Dendritic cell treated with granulocyte-macrophage colony-stimulating factor and Interleukin-4, amounts not matched to agents 40 ng/mL and 50 ng/mL, for 4 days (primary cell): ENCODE measurements at regions of chr12 and their contacts with region 1.

Region 1: GRCh38 chr12:10243818-10244520 is 31.3 kb downstream of the GABARAPL1 start:
- H3K4me3 Mint-ChIP-seq: peak overlapping the region; percentile 77
- H3K27ac Mint-ChIP-seq: peak overlapping the region; percentile 68
- H3K4me1 Mint-ChIP-seq: peaks cover 12% of the 10 kb centered on the region
- H3K27me3 Mint-ChIP-seq: peaks cover 17% of the 10 kb centered on the region

Region 2: GRCh38 chr12:10130042-10130441 is 113.9 kb before region 1 on chr12 and contains the start of gene CLEC7A:
- intact Hi-C with region 1: no loop called
- H3K4me3 Mint-ChIP-seq: peak within 1 kb of the TSS; percentile 84
- H3K27ac Mint-ChIP-seq: peak within 1 kb of the TSS; percentile 97
- H3K4me1 Mint-ChIP-seq: peaks cover 48% of the 10 kb centered on the region
- H3K27me3 Mint-ChIP-seq: no peaks in the 10 kb centered on the region

Region 3: GRCh38 chr12:10310926-10311720 is 67.2 kb after region 1 on chr12:
- intact Hi-C with region 1: loop called (anchors 10 kb)
- H3K4me3 Mint-ChIP-seq: no peak overlapping the region
- H3K27ac Mint-ChIP-seq: no peak overlapping the region
- H3K4me1 Mint-ChIP-seq: peaks cover 9% of the 10 kb centered on the region
- H3K27me3 Mint-ChIP-seq: no peaks in the 10 kb centered on the region

Region 4: DNA sequence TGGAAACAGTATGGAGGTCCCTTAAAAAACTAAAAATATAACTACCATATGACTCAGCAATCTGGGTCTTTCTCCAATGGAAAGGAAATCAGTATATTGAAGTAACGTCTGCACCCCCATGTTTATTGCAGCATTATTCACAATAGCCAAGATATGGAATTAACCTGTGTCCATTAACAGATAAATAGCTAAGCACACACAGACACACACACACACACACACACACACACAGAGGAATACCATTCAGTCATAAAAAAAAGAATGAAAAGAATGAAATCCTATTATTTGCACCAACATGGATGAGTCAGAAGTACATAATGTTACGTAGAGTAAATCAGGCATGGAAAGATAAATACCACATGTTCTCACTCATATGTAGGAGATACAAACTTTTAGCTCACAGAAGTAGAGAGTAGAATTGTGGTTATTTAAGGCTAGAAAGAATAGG is 141.2 kb after region 1 on chr12:
- intact Hi-C with region 1: no loop called
- H3K4me3 Mint-ChIP-seq: no peak overlapping the region
- H3K27ac Mint-ChIP-seq: no peak overlapping the region
- H3K4me1 Mint-ChIP-seq: no peaks in the 10 kb centered on the region
- H3K27me3 Mint-ChIP-seq: peaks cover 5% of the 10 kb centered on the region